CD8-positive, alpha-beta T cell (primary cell): ENCODE measurements at regions of chr1 and their contacts with region 1.

Region 1: DNA sequence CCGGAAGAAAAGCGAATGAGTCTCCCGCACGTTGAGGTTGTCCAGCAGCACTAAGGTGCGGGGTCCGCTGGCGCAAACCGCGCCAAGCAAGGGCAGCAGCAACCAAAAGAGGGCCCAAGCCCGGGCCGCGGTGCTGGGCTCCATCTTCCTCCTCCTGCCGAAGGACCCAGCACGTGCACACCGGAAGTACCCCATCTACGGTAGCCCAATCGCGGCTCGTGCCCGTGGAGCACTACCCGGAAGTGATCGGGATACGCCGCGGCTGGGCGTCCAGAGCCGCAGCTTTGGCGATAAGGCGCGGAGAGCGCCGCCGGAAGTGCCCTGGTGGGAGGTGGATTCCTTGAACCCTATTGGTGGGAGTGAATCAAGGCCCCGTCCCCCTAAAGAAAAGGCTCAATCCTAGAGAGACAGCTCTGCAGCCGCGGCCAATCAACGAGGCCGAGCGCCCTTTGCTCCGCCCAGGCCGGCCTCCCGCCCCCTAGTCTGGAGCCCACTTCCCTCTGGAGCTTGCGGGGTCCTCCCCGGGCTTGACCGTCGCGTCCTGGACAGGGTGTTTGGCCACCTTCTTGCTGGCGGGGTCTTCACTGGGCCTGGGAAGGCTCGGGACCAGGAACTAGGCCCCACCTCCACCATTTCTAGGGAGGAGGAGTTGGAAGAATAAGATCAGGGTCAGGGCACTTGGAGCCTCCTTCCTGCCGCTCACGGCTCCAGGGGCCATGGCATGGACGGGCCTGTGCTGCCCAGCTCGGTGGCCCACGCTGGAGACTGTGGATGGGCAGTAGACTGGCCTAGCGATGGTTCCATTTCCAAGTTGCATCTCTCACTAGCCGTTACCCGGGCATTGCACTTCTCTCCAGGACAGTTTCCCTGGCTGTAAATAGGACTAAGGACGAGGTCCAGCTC is at the start of gene DDOST:
- DNase-seq: peak; percentile 86 to 98 (median 94)
- ATAC-seq: peak; percentile 94
- H3K4me3 ChIP-seq: peak within 1 kb of the TSS; percentile 85 to 95
- H3K4me3 Mint-ChIP-seq: peak within 1 kb of the TSS; percentile 98
- H3K27ac ChIP-seq: peak within 1 kb of the TSS; percentile 81 to 87
- H3K27ac Mint-ChIP-seq: peak within 1 kb of the TSS; percentile 98
- H3K4me1 ChIP-seq: peaks cover 28% of the 10 kb centered on the region
- H3K4me1 Mint-ChIP-seq: peaks cover 52% of the 10 kb centered on the region
- H3K27me3 ChIP-seq: no peaks in the 10 kb centered on the region
- H3K27me3 Mint-ChIP-seq: no peaks in the 10 kb centered on the region
- CTCF ChIP-seq: peak; percentile 27
- total RNA-seq, gene DDOST: 97.5 to 114 TPM

Region 2: DNA sequence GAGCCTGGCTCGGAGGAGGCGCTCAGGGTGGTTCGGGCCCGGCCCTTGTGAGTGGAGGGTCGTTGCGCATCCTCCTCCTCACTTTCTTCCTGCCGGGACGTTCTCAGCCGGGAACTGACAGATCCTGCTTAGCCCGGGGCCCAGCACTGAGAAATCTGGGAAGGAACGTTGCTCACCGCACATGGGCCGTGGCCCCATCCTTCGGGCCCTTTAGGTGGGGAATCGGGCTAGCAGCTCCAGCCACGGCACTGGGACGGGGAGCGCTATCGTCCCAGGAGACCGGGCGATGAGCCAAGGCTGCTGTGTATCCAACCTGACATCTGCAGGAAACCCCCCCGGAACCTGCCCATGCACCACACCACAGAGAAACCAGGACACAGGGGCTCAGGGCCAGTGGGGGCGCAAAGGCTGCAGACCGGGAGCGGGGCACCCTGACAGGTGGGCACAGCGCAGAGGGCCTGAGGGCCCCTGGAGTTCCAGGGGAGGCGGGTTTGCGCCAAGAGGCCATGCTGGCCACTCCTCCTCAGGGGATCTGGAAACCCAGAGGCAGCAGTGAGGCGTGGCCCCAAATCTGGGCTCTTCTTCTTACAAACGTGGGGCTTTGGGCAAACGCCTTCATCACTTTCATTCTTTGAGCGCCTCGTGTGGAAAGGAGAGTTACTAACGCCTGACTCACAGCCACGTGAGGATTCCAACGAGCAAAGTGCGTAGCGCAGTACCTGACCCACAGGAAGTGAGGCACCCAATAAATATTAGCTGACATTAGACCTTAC is 71.3 kb after region 1 on chr1 and contains the start of gene SH2D5:
- CTCF ChIA-PET with region 1: no interaction called
- POLR2A ChIA-PET with region 1: no interaction called
- intact Hi-C with region 1: loop called in 1 of 2 experiments (anchors 1 kb)
- DNase-seq: peak; percentile 39 to 86 (median 64)
- ATAC-seq: peak; percentile 65
- H3K4me3 ChIP-seq: peak within 1 kb of the TSS; percentile 60 to 67
- H3K4me3 Mint-ChIP-seq: peak within 1 kb of the TSS; percentile 79
- H3K27ac ChIP-seq: peak within 1 kb of the TSS in 1 of 2 experiments; percentile 4
- H3K27ac Mint-ChIP-seq: no peak within 1 kb of the TSS
- H3K4me1 ChIP-seq: peaks cover 21% of the 10 kb centered on the region
- H3K4me1 Mint-ChIP-seq: peaks cover 23% of the 10 kb centered on the region
- H3K27me3 ChIP-seq: peaks cover 0 to 5% of the 10 kb centered on the region in 2 experiments
- H3K27me3 Mint-ChIP-seq: peaks cover 21% of the 10 kb centered on the region
- CTCF ChIP-seq: peak; percentile 62
- total RNA-seq, gene SH2D5: not detected

Region 3: GRCh38 chr1:21176586-21177555 is 515.4 kb after region 1 on chr1 and contains the start of gene EIF4G3:
- CTCF ChIA-PET with region 1: no interaction called
- POLR2A ChIA-PET with region 1: no interaction called
- intact Hi-C with region 1: loop called in 1 of 2 experiments (anchors 1 kb)
- DNase-seq: peak; percentile 97 to 100 (median 99)
- ATAC-seq: peak; percentile 95
- H3K4me3 ChIP-seq: peak within 1 kb of the TSS; percentile 77 to 86
- H3K4me3 Mint-ChIP-seq: peak within 1 kb of the TSS; percentile 92
- H3K27ac ChIP-seq: peak within 1 kb of the TSS; percentile 78 to 88
- H3K27ac Mint-ChIP-seq: peak within 1 kb of the TSS; percentile 91
- H3K4me1 ChIP-seq: peaks cover 18% of the 10 kb centered on the region
- H3K4me1 Mint-ChIP-seq: peaks cover 24% of the 10 kb centered on the region
- H3K27me3 ChIP-seq: no peaks in the 10 kb centered on the region
- H3K27me3 Mint-ChIP-seq: no peaks in the 10 kb centered on the region
- CTCF ChIP-seq: no peak
- total RNA-seq, gene EIF4G3: 19.6 to 19.8 TPM

Region 4: DNA sequence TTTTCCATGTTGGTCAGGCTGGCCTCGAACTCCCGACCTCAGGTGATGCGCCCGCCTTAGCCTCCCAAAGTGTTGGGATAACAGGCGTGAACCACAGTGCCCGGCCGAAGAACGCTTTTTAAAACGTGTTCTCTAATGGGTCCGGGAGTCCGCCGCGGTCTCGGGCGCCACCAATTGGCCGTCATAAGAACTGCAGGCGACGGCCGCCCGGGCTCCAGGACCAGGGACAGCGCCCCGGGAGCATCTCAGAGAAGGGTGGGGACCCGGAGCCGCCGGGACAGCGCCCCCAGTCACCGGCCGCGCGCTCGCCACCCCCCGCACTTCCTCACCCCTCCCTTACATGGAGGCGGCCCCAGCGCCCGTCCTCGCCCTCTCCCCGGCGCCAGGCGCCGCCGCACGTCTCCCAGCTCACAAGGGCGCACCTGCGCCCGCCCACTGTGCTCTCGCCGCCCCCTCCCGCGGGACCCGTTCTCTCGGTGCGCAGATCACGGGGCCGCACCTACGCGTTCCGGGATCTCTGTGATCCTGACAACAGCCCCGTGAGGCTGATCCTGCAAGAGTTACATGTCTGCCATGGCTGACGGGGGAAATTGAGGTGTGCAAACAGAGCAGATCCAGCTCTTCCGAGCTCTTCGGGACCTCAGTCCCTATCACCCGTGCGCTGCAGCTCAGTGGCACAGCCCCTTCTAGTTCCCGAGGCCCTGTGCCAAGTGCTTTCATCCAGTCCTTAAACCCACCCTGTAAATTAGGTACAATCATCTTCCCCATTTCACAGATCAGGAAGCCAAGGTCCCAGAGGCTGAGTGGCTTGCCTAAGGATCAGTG is 997.9 kb after region 1 on chr1:
- CTCF ChIA-PET with region 1: no interaction called
- POLR2A ChIA-PET with region 1: no interaction called
- intact Hi-C with region 1: loop called in 1 of 2 experiments (anchors 10 kb)
- DNase-seq: peak; percentile 65 to 90 (median 84)
- ATAC-seq: peak; percentile 99
- H3K4me3 ChIP-seq: peak overlapping the region; percentile 8 to 10
- H3K4me3 Mint-ChIP-seq: peak overlapping the region; percentile 32
- H3K27ac ChIP-seq: no peak overlapping the region
- H3K27ac Mint-ChIP-seq: no peak overlapping the region
- H3K4me1 ChIP-seq: peaks cover 8% of the 10 kb centered on the region
- H3K4me1 Mint-ChIP-seq: peaks cover 5% of the 10 kb centered on the region
- H3K27me3 ChIP-seq: peaks cover 5 to 10% of the 10 kb centered on the region in 2 experiments
- H3K27me3 Mint-ChIP-seq: peaks cover 17% of the 10 kb centered on the region
- CTCF ChIP-seq: peak; percentile 93

Region 5: DNA sequence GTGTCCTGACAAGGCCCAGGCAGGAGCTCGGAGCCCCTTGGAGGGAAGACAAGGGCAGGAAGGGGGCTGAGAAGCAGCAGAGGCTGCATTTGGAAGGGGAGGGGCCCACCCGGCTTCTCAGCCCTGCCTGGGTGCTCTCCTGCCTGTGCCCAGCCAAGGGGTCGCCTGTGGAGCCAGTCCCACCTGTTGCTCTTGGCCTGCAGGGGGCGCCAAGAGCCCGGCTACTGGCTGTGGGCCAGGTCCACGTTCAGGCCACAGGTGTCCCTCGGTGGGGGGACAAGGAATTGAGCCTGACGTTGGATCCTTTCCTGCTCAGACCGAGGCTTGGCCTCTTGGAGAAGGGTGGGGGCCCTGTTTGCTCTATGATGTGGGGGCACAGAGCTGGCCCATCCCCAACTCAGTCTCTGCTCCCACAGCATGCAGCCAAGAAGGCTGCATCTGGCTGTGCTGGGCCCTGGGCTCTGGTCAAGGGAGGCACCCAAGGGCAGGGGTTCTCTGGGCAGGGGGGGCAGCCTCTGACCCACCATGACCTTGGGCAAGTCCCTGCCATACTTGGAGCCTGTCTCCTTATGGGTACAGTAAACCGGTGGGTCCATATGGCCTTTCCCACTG is 1470.5 kb after region 1 on chr1:
- CTCF ChIA-PET with region 1: no interaction called
- POLR2A ChIA-PET with region 1: no interaction called
- intact Hi-C with region 1: no loop called
- DNase-seq: peak in 8 of 9 experiments; percentile 30 to 72 (median 58)
- ATAC-seq: peak; percentile 38
- H3K4me3 ChIP-seq: no peak overlapping the region
- H3K4me3 Mint-ChIP-seq: no peak overlapping the region
- H3K27ac ChIP-seq: no peak overlapping the region
- H3K27ac Mint-ChIP-seq: no peak overlapping the region
- H3K4me1 ChIP-seq: no peaks in the 10 kb centered on the region
- H3K4me1 Mint-ChIP-seq: no peaks in the 10 kb centered on the region
- H3K27me3 ChIP-seq: no peaks in the 10 kb centered on the region
- H3K27me3 Mint-ChIP-seq: peaks cover 2% of the 10 kb centered on the region
- CTCF ChIP-seq: peak; percentile 52